ENCODE measurements at regions of chr9 and their contacts with region 1.

Region 1: GRCh38 chr9:127916665-127917613 is at the start of gene ST6GALNAC4:
- DNase-seq: peak; percentile 94 to 96
- ATAC-seq: peak; percentile 91 to 97 (median 94)
- H3K4me3 ChIP-seq: peak within 1 kb of the TSS; percentile 64 to 96 (median 76)
- H3K27ac ChIP-seq: peak within 1 kb of the TSS in 9 of 10 donors; percentile 40 to 79 (median 77)
- H3K4me1 ChIP-seq: peaks cover 10 to 61% (median 49%) of the 10 kb centered on the region in 9 donors
- H3K27me3 ChIP-seq: peaks cover 0 to 3% (median 0%) of the 10 kb centered on the region in 7 donors
- CTCF ChIP-seq: no peak
- total RNA-seq, gene ST6GALNAC4: 23.2 to 52.9 (median 33.9) TPM

Region 2: GRCh38 chr9:127503947-127504782 is 412.8 kb before region 1 on chr9:
- intact Hi-C with region 1: loop called in 7 of 10 experiments (anchors 5 to 10 kb)
- DNase-seq: peak; percentile 81 to 88
- ATAC-seq: peak; percentile 71 to 91 (median 86)
- H3K4me3 ChIP-seq: no peak overlapping the region
- H3K27ac ChIP-seq: peak overlapping the region in 3 of 10 donors; percentile 8 to 41 (median 20)
- H3K4me1 ChIP-seq: peaks cover 0 to 13% (median 3%) of the 10 kb centered on the region in 9 donors
- H3K27me3 ChIP-seq: no peaks in the 10 kb centered on the region
- CTCF ChIP-seq: peak; percentile 79 to 96 (median 89)

Region 3: DNA sequence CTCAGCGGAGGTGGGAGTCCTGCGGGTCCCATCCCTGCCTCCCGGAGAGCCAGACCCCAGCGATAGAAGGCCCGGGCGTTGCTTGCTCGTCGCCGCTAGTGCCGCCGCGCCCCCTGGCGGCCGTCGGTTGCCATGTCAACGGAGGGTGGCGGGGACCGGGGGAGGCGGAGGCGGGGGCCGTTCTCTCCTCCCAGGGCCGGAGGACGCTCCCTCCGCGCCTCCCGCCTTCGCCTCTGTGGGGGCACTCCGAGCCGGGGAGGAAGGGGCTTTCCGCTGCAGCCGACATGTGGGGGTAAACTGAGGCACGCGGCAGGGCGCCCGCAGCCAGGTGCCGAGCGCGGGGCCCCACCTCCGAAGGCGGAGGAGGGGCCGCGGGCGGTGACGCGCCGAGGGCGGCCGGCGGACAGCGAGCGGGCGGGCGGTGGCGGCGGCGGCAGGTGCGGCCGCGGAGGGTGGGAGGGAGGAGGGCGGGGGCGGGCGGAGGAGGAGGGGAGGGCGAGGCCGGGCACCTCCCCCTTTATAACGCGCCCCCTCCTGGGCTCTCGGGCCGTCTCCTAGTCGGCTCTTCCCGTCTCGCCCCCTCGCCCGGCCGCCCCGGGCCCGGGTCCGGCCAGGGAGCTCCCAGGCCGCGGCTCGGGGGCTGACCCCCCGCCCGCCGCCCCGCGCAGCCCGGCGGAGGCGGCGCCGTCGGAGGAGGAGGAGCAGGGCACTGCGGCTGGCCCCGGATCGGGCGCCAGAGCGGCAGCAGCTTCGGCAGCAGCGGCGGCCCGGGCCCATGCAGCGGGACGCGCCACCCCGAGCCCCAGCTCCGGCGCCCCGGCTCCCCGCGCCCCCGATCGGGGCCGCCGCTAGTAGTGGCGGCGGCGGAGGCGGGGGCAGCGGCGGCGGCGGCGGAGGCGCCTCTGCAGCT is 131.7 kb before region 1 on chr9:
- intact Hi-C with region 1: loop called in 7 of 10 experiments (anchors 2 to 10 kb)
- DNase-seq: peak; percentile 89 to 92
- ATAC-seq: peak; percentile 62 to 78 (median 70)
- H3K4me3 ChIP-seq: peak overlapping the region; percentile 19 to 100 (median 97)
- H3K27ac ChIP-seq: peak overlapping the region; percentile 88 to 99 (median 98)
- H3K4me1 ChIP-seq: peaks cover 9 to 82% (median 52%) of the 10 kb centered on the region in 9 donors
- H3K27me3 ChIP-seq: no peaks in the 10 kb centered on the region
- CTCF ChIP-seq: peak; percentile 90 to 96 (median 92)

Region 4: DNA sequence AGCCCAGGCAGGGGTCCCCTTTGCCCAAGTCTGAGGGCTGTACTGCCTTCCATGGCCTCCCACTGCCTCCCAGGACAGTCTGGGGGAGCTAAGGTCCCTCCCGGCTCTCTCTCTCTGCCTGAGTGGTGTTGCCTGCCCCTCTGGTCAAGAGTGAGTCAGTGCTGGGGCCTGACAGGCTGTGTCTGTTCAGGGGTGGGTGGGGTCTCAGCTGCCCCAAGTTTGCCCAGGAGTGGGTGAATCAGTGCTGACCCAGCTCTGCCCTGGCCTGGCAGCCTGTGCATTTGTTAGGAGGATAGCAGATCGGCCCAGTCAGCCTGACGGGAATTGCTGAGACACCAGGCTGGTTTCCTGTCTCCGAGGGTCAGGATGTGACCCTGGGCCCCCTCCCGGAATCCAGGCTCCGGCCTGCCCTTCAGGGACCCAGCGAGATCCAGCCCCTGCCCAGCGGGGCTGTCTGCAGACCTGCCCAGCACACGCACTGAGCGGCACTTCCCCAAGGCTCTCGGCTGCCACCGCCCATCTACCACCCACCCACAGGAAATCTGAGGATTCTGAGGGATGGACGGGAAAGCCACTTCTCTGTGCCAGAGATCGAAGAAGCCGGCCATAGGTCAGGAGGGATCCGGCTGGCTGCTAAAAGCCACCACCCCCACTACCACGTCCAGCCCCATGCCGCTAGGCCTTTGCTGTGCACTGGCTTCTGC is 78.4 kb before region 1 on chr9:
- intact Hi-C with region 1: no loop called
- DNase-seq: peak; percentile 74 to 75
- ATAC-seq: peak; percentile 59 to 90 (median 75)
- H3K4me3 ChIP-seq: peak overlapping the region in 8 of 10 donors; percentile 2 to 32 (median 20)
- H3K27ac ChIP-seq: peak overlapping the region; percentile 72 to 99 (median 88)
- H3K4me1 ChIP-seq: peaks cover 38 to 100% (median 85%) of the 10 kb centered on the region in 9 donors
- H3K27me3 ChIP-seq: no peaks in the 10 kb centered on the region
- CTCF ChIP-seq: no peak

Region 5: GRCh38 chr9:127857791-127858512 is 59.0 kb before region 1 on chr9:
- intact Hi-C with region 1: no loop called
- DNase-seq: peak; percentile 75 to 87
- ATAC-seq: peak in 7 of 8 donors; percentile 12 to 25 (median 18)
- H3K4me3 ChIP-seq: peak overlapping the region in 5 of 10 donors; percentile 0 to 32 (median 10)
- H3K27ac ChIP-seq: peak overlapping the region; percentile 80 to 99 (median 94)
- H3K4me1 ChIP-seq: peaks cover 50 to 92% (median 82%) of the 10 kb centered on the region in 9 donors
- H3K27me3 ChIP-seq: no peaks in the 10 kb centered on the region
- CTCF ChIP-seq: no peak

Region 6: GRCh38 chr9:127869310-127870152 is 47.4 kb before region 1 on chr9:
- intact Hi-C with region 1: loop called in 2 of 10 experiments (anchors 5 kb)
- DNase-seq: peak; percentile 91 to 94
- ATAC-seq: peak; percentile 43 to 85 (median 78)
- H3K4me3 ChIP-seq: no peak overlapping the region
- H3K27ac ChIP-seq: peak overlapping the region in 9 of 10 donors; percentile 7 to 92 (median 47)
- H3K4me1 ChIP-seq: peaks cover 9 to 64% (median 42%) of the 10 kb centered on the region in 9 donors
- H3K27me3 ChIP-seq: no peaks in the 10 kb centered on the region
- CTCF ChIP-seq: peak; percentile 85 to 92 (median 89)

Region 7: DNA sequence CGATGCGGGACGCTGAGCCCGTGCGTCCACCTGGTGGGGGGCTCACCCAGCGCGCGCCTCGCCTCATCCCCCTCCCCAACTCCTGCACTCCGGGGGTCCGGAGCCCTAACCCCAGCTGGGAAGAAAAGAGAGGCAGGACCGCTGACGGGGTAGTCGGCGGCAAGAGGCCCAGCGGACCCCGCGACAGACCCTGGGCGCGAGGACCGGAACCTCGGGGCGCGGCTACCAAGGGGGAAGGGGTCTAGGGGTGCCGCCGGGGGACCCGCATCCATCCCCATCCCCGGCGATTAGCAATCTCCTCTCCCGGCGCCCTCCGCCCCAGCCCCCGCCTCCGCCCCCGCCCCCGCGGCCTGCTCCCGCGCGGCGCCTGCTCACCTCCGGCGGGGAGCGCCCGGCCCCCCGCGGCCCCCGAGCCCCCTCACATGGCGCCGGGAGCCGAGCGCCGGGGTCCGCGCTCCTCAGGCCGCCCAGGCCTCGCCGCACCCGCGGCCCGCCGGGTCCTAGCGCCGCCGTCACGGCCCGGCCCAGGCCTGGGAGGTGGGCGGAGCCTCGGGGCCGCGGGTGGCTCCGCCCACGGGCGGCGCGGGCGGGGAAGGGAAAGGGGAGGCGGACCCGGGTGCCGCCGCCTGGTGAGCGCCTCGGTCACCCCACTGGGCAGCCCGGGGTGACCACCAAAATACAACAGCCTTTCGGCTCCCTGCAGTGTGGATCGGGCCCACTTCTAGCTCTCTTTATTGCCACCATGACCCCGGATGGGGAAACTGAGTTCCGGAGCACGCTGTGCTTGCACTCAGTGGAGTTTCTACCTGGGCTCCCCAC is 17.6 kb before region 1 on chr9 and contains the start of gene ST6GALNAC6:
- intact Hi-C with region 1: loop called in 1 of 10 experiments (anchors 2 kb)
- DNase-seq: peak; percentile 72 to 82
- ATAC-seq: peak; percentile 54 to 85 (median 76)
- H3K4me3 ChIP-seq: peak within 1 kb of the TSS; percentile 88 to 100 (median 98)
- H3K27ac ChIP-seq: peak within 1 kb of the TSS; percentile 85 to 98 (median 95)
- H3K4me1 ChIP-seq: peaks cover 24 to 59% (median 46%) of the 10 kb centered on the region in 9 donors
- H3K27me3 ChIP-seq: no peaks in the 10 kb centered on the region
- CTCF ChIP-seq: peak in 3 of 9 donors; percentile 30 to 35 (median 35)
- total RNA-seq, gene ST6GALNAC6: 32.8 to 52.0 (median 44.7) TPM

Measured in heart right ventricle (tissue), 16 donors.